HepG2 (cell line): ENCODE measurements at regions of chr10 and their contacts with region 1.

Region 1: GRCh38 chr10:97676770-97677581 is 10.1 kb downstream of the AVPI1 start:
- DNase-seq: peak; percentile 49
- ATAC-seq: peak; percentile 75
- H3K4me3 ChIP-seq: no peak overlapping the region
- H3K27ac ChIP-seq: no peak overlapping the region
- H3K4me1 ChIP-seq: peaks cover 3% of the 10 kb centered on the region
- H3K27me3 ChIP-seq: no peaks in the 10 kb centered on the region
- CTCF ChIP-seq: peak; percentile 82
- EP300 ChIP-seq: no peak
- POLR2A ChIP-seq: peak; percentile 22 to 25; a peak in 1 of 4 replicates
- RAD21 ChIP-seq: peak; percentile 74

Region 2: DNA sequence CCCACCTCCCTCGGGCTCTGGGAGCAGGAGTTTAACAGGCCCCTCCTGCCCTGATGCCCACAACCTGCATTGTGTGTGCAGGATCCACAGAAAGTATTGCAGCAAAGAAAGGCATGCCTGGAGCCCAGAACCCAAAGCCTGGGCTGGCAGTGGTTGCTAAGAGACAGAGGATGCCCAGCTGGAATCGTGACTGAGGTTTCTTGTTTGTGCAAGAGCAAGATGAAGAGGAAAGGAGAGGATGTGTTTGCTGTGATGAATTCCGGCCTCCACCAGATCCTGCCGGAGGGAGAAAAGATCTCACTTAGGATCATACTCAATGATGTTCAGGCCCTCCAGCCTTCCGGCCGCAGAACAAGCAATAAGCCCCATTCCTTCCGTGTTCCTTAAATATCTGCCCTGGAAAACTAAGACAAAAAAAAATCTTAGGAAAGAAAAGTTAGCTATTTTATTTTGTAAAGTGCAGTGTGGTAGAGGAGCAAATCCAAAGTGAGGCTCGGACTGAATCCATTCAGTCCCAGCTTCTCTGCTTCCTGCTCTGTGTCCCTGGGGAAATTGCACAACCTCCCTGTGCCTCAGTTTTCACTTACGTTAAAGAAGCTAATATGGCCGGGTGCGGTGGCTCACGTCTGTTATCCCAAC is 548.3 kb before region 1 on chr10:
- CTCF ChIA-PET with region 1: no interaction called
- POLR2A ChIA-PET with region 1: no interaction called
- in situ Hi-C with region 1: no loop called
- intact Hi-C with region 1: no loop called
- DNase-seq: no peak
- ATAC-seq: no peak
- H3K4me3 ChIP-seq: no peak overlapping the region
- H3K27ac ChIP-seq: no peak overlapping the region
- H3K4me1 ChIP-seq: peaks cover under 1% of the 10 kb centered on the region; the same call in 1 of the 2 replicates
- H3K27me3 ChIP-seq: peaks cover 4 to 82% of the 10 kb centered on the region in 2 experiments
- CTCF ChIP-seq: no peak
- EP300 ChIP-seq: no peak
- POLR2A ChIP-seq: no peak
- RAD21 ChIP-seq: no peak

Region 3: GRCh38 chr10:97640174-97640867 is 36.7 kb before region 1 on chr10 and contains the start of gene PI4K2A:
- CTCF ChIA-PET with region 1: no interaction called
- POLR2A ChIA-PET with region 1: no interaction called
- in situ Hi-C with region 1: no loop called
- intact Hi-C with region 1: no loop called
- DNase-seq: peak; percentile 98
- ATAC-seq: peak; percentile 99
- H3K4me3 ChIP-seq: peak within 1 kb of the TSS; percentile 81 to 91 (median 89)
- H3K27ac ChIP-seq: peak within 1 kb of the TSS; percentile 52
- H3K4me1 ChIP-seq: peaks cover 34% of the 10 kb centered on the region
- H3K27me3 ChIP-seq: no peaks in the 10 kb centered on the region
- CTCF ChIP-seq: no peak; the same call in 1 of the 2 replicates
- EP300 ChIP-seq: no peak
- POLR2A ChIP-seq: peak; percentile 54 to 57; a peak in 3 of 4 replicates
- RAD21 ChIP-seq: no peak
- total RNA-seq, gene PI4K2A: 14.3 and 16.6 TPM in 2 replicates

Region 4: GRCh38 chr10:97731346-97732051 is 54.5 kb after region 1 on chr10:
- CTCF ChIA-PET with region 1: interaction called, 40 read pairs
- POLR2A ChIA-PET with region 1: interaction called, 25 read pairs
- in situ Hi-C with region 1: loop called (anchors 5 kb)
- intact Hi-C with region 1: loop called (anchors 1 kb)
- DNase-seq: peak; percentile 66
- ATAC-seq: peak; percentile 76
- H3K4me3 ChIP-seq: no peak overlapping the region
- H3K27ac ChIP-seq: no peak overlapping the region
- H3K4me1 ChIP-seq: peaks cover 11% of the 10 kb centered on the region
- H3K27me3 ChIP-seq: peaks cover 0 to 10% of the 10 kb centered on the region in 2 experiments; a peak in 2 of 5 replicates
- CTCF ChIP-seq: peak; percentile 94
- EP300 ChIP-seq: no peak
- POLR2A ChIP-seq: no peak
- RAD21 ChIP-seq: peak; percentile 89

Region 5: GRCh38 chr10:97792141-97792721 is 115.3 kb after region 1 on chr10:
- CTCF ChIA-PET with region 1: no interaction called
- POLR2A ChIA-PET with region 1: no interaction called
- in situ Hi-C with region 1: no loop called
- intact Hi-C with region 1: no loop called
- DNase-seq: peak; percentile 48
- ATAC-seq: no peak; the same call in 1 of the 3 replicates
- H3K4me3 ChIP-seq: no peak overlapping the region
- H3K27ac ChIP-seq: no peak overlapping the region
- H3K4me1 ChIP-seq: peaks cover 13% of the 10 kb centered on the region
- H3K27me3 ChIP-seq: peaks cover 2 to 11% of the 10 kb centered on the region in 2 experiments; a peak in 2 of 5 replicates
- CTCF ChIP-seq: peak; percentile 93
- EP300 ChIP-seq: no peak
- POLR2A ChIP-seq: no peak
- RAD21 ChIP-seq: peak; percentile 76

Region 6: GRCh38 chr10:97861097-97861750 is 184.2 kb after region 1 on chr10:
- CTCF ChIA-PET with region 1: no interaction called
- POLR2A ChIA-PET with region 1: no interaction called
- in situ Hi-C with region 1: no loop called
- intact Hi-C with region 1: no loop called
- DNase-seq: no peak
- ATAC-seq: peak; percentile 26; the same call in 1 of the 3 replicates
- H3K4me3 ChIP-seq: no peak overlapping the region
- H3K27ac ChIP-seq: no peak overlapping the region
- H3K4me1 ChIP-seq: peaks cover 10% of the 10 kb centered on the region; the same call in 1 of the 2 replicates
- H3K27me3 ChIP-seq: peaks cover 11 to 54% of the 10 kb centered on the region in 2 experiments
- CTCF ChIP-seq: no peak
- EP300 ChIP-seq: no peak
- POLR2A ChIP-seq: no peak
- RAD21 ChIP-seq: no peak